PC-3 (cell line): ENCODE measurements at regions of chr1 and their contacts with region 1.

Region 1: DNA sequence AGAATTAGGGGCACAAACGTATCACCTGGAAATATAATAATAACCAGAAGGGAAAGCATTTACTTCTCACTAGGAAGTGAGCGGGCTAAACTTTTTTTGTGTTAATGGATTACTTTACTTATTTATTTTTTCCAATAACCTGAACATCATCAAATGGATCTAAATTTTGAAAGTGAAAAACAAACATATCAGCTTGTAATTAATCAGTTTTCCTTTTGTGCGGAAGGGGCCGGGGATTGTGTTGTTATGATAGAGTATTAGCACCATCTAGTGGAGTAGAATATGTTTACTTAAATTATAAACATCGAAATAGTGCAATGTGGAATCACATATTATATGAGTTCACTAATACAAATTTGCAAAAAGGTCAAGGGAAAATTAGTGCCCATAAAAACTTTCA is 9.0 kb downstream of the CFH start:
- DNase-seq: peak; percentile 47
- ATAC-seq: no peak; the same call in 1 of the 2 replicates
- H3K4me3 ChIP-seq: no peak overlapping the region
- H3K27ac ChIP-seq: no peak overlapping the region
- H3K4me1 ChIP-seq: no peaks in the 10 kb centered on the region
- H3K27me3 ChIP-seq: no peaks in the 10 kb centered on the region
- CTCF ChIP-seq: peak; percentile 64

Region 2: GRCh38 chr1:196148367-196148970 is 512.4 kb before region 1 on chr1:
- CTCF ChIA-PET with region 1: interaction called, 3 read pairs
- POLR2A ChIA-PET with region 1: no interaction called
- intact Hi-C with region 1: loop called (anchors 5 kb)
- DNase-seq: peak; percentile 70
- ATAC-seq: peak; percentile 53
- H3K4me3 ChIP-seq: no peak overlapping the region
- H3K27ac ChIP-seq: no peak overlapping the region
- H3K4me1 ChIP-seq: no peaks in the 10 kb centered on the region
- H3K27me3 ChIP-seq: no peaks in the 10 kb centered on the region
- CTCF ChIP-seq: peak; percentile 63

Region 3: DNA sequence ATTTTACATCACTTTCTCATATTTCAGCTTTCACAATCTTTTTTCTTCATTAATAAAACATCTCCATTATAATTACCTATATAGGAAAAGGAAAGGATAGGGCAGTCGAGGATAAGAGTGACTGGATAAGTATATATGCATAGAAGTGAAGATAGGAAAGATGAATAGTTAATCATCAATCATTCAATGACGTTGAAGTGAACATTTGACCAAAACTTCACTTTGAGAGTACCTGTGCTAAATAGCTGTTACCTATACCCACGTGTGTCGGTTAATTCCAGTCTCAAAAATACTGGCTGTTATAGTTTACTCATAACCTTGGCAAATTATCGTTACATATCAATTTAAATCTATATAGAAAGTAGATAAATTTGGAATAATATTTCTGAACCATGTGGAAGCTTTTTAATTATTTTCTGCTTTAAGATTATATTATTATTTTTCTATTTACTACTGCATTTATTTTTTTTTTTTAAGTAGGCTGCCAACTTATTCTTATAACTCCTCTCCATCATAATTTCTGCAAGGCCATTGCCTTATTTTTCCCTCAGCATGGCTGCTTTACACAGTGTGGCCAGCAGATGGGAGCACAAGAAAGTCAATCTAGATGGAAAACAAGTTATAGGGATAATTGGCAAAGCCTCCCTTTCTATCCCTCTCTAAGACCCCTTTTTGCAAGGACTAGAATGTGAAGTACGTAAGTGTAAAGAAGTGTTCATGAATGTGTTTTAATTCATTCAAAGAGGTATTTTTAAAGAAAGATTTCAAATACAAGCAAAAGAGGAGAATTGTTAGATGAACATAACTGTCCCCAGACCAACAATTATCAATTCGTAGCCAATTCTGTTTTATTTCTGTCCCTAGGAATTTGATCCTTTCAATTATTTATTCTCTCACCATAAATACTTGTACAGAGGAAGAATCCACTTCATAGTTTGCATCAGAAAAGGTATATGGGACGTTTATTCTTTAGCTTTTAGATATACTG is 343.0 kb before region 1 on chr1:
- CTCF ChIA-PET with region 1: no interaction called
- POLR2A ChIA-PET with region 1: no interaction called
- intact Hi-C with region 1: loop called (anchors 1 kb)
- DNase-seq: peak; percentile 49
- ATAC-seq: no peak
- H3K4me3 ChIP-seq: no peak overlapping the region
- H3K27ac ChIP-seq: no peak overlapping the region
- H3K4me1 ChIP-seq: no peaks in the 10 kb centered on the region
- H3K27me3 ChIP-seq: no peaks in the 10 kb centered on the region
- CTCF ChIP-seq: peak; percentile 64

Region 4: GRCh38 chr1:196355206-196355786 is 305.6 kb before region 1 on chr1:
- CTCF ChIA-PET with region 1: interaction called, 4 read pairs
- POLR2A ChIA-PET with region 1: no interaction called
- intact Hi-C with region 1: loop called (anchors 1 kb)
- DNase-seq: peak; percentile 33
- ATAC-seq: no peak
- H3K4me3 ChIP-seq: no peak overlapping the region
- H3K27ac ChIP-seq: no peak overlapping the region
- H3K4me1 ChIP-seq: peaks cover 2% of the 10 kb centered on the region
- H3K27me3 ChIP-seq: no peaks in the 10 kb centered on the region
- CTCF ChIP-seq: peak; percentile 63

Region 5: DNA sequence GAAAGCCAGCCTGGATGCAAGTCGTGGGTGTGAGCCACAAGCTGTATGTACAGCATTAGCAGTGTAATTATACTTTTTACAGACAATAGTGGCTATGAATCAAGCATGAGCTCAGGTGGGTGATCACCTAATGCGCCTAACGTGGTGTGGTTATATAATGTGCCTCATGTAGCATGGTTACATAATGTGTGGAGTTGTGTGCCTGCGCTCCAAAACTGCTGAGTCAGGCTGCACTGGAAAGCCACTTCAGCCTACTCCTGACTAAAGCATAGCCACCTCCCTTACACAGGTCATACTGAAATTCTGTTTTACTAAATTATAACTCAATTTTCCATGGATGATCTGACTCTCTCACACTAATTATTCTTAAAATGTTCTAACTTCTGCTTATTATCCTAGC is 122.4 kb before region 1 on chr1:
- CTCF ChIA-PET with region 1: no interaction called
- POLR2A ChIA-PET with region 1: no interaction called
- intact Hi-C with region 1: no loop called
- DNase-seq: no peak
- ATAC-seq: no peak
- H3K4me3 ChIP-seq: no peak overlapping the region
- H3K27ac ChIP-seq: no peak overlapping the region
- H3K4me1 ChIP-seq: no peaks in the 10 kb centered on the region
- H3K27me3 ChIP-seq: no peaks in the 10 kb centered on the region
- CTCF ChIP-seq: no peak

Region 6: DNA sequence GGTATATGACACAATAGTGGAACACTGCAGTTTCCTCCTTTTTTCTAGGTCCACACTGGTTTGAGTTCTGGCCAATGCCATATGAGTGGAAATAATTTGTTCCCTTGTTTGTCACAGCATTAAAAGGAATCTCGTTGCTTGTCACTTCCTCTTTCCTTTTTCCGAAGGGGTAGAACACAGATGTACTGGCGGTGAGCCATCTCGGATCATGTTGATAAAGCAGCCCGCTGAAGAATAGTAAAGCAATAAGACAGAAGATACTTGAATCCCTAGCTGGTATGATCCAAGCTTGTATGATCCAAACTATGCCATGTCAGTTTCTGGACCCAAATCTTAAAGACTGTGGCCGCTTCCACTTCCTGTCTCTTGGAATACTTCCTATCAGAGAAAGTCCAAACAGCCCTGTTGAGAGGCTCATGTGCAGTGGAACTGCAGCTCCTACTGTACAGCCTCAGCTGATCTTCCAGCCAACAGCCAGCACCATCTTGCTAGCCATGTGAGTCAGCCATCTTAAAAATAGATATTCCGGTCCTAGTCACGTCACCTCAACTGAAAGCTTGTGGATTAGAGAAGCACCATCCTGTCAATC is 356.8 kb after region 1 on chr1:
- CTCF ChIA-PET with region 1: no interaction called
- POLR2A ChIA-PET with region 1: no interaction called
- intact Hi-C with region 1: no loop called
- DNase-seq: no peak
- ATAC-seq: no peak
- H3K4me3 ChIP-seq: no peak overlapping the region
- H3K27ac ChIP-seq: no peak overlapping the region
- H3K4me1 ChIP-seq: no peaks in the 10 kb centered on the region
- H3K27me3 ChIP-seq: no peaks in the 10 kb centered on the region
- CTCF ChIP-seq: no peak